Head of caudate nucleus (tissue), 42 donors: ENCODE measurements at regions of chr14 and their contacts with region 1.

Region 1: GRCh38 chr14:22986508-22987054 is 4.2 kb upstream of the AJUBA start:
- DNase-seq: peak; percentile 73 to 99 (median 94)

Region 2: DNA sequence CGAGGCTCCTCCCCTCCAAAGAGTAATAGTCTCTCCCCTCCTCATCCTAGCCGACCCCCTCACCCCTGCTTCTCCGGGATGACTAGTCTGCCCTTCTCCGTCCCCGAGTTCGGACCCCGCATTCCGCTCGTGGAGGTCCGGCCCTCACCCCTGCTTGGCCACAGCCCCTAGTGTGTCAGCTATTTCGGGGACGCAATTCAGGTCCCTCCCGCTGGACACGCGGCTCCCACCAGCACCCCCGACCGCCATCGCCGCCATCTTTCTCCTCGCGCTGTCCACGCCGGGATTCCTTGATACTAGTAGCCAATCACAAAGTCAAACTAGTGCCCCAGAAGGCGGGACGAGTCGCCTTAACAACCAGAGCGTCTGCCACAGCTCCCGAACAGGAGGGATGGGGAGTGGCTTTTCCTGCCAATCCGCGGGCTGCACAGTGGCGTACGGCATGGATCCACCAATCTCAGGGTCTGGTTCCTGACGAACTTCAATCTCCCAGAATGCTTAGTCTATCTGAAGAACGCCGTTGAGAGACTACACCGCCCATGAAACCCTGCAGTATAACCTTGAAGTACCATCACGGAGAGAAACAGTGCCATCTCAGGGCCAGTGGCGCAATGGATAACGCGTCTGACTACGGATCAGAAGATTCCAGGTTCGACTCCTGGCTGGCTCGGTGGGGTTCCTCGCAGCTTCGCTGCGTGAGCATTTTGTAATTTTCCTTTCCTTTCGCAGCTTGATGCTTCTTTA is 57.3 kb before region 1 on chr14 and contains the start of gene PRMT5:
- intact Hi-C with region 1: loop called (anchors 10 kb)
- DNase-seq: peak; percentile 92 to 100 (median 99)

Region 3: DNA sequence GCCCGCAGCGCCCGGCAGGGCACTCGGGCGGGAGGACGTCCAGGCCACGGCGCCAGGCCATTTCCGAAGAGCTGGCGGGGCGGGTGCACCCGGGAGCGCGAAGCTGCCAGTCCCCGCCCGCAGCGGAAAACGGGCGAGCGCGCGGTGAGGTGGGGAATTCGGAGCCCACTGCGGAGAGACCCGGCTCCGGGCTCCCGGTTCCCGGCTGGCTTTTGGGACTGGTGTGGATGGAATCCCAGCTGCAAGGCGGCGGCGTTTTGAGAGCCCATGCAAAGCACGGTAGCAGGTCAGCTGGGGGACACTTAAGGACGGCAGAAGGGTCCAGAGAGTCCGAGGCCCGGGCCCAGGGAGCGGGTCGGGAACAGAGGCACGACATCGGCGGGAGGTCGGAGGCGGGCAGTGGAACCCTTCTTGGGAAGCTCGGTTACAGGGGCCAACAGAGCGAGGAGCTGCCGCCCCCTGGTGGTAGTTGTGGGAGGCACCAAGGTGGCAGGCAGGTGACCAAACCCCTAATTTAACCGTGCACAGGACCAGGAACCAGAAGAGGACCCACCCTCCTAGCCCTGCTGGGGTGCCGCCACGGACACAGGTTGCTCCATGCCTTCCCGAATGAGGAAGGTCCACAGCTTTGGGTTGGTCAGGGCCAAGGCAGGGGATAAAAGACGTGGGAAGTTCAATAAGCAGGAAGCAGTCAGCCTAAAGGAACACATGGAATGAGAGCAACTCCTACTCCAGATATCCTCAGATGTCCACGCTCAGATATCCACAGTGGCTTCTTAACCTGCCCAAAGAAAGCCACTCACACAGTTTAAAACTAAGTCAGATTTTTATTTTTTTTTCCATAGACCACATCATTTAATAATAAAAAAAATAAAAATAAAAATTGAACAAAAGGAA is 71.4 kb after region 1 on chr14:
- intact Hi-C with region 1: loop called (anchors 2 kb)
- DNase-seq: peak; percentile 81 to 97 (median 91)